Caco-2 (cell line): ENCODE measurements at regions of chr3 and their contacts with region 1.

Region 1: DNA sequence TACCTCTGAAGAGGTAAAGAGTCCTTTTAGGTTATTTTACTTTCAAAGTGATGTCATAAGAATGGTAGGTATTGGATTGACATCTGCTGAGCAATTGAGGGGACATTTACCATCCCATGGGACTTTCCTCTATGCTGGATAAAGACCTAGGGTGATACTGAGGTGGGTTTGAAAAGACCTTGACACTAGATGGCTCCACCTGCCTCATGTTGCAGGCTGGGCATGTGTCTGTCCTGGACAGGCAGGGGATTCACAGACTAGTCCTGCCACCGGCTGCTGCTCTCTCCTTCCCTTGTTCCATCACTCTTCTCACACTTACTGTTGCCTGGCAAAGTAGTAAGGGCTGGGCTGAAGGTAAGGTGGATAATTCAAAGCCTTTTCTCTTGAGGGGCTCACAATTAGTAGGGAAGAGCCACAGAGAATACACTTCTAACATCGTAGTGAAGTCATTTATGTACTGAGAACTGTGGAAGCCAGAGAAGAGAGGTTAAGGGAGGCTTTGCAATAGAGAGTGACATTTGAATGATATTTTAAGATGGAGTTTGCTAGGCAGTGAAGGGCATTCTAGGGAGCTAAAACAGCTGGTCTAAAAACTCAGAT is 27.7 kb downstream of the TRAK1 start:
- DNase-seq: peak; percentile 79
- H3K4me3 ChIP-seq: no peak overlapping the region
- H3K4me3 Mint-ChIP-seq: no peak overlapping the region
- H3K27ac Mint-ChIP-seq: peak overlapping the region; percentile 38
- H3K4me1 ChIP-seq: peaks cover 49% of the 10 kb centered on the region
- H3K4me1 Mint-ChIP-seq: peaks cover 41% of the 10 kb centered on the region
- H3K27me3 ChIP-seq: no peaks in the 10 kb centered on the region
- H3K27me3 Mint-ChIP-seq: no peaks in the 10 kb centered on the region
- CTCF ChIP-seq: peak; percentile 65 to 74

Region 2: DNA sequence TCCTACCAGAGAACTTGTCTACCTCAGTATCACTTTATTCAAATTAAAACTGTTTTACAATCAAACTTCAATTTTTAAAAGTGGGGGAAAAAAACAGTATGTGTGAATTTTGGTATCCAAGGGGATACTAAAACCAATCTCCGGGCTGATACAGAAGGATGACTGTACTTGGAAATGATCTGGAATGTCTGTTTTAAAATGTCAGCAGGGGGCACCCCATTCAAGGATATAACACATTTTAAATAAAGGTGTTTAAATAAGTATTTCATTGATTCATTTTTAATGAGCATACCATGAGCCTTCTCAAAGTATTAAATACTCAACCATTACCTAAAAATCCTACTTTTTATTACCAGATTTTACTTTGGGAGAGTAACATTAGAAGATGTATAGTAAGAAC is 224.9 kb before region 1 on chr3:
- CTCF ChIA-PET with region 1: no interaction called
- POLR2A ChIA-PET with region 1: no interaction called
- intact Hi-C with region 1: loop called (anchors 1 kb)
- DNase-seq: peak in 1 of 2 experiments; percentile 44
- H3K4me3 ChIP-seq: no peak overlapping the region
- H3K4me3 Mint-ChIP-seq: no peak overlapping the region
- H3K27ac Mint-ChIP-seq: no peak overlapping the region
- H3K4me1 ChIP-seq: no peaks in the 10 kb centered on the region
- H3K4me1 Mint-ChIP-seq: no peaks in the 10 kb centered on the region
- H3K27me3 ChIP-seq: no peaks in the 10 kb centered on the region
- H3K27me3 Mint-ChIP-seq: no peaks in the 10 kb centered on the region
- CTCF ChIP-seq: peak in 1 of 2 experiments; percentile 34

Region 3: DNA sequence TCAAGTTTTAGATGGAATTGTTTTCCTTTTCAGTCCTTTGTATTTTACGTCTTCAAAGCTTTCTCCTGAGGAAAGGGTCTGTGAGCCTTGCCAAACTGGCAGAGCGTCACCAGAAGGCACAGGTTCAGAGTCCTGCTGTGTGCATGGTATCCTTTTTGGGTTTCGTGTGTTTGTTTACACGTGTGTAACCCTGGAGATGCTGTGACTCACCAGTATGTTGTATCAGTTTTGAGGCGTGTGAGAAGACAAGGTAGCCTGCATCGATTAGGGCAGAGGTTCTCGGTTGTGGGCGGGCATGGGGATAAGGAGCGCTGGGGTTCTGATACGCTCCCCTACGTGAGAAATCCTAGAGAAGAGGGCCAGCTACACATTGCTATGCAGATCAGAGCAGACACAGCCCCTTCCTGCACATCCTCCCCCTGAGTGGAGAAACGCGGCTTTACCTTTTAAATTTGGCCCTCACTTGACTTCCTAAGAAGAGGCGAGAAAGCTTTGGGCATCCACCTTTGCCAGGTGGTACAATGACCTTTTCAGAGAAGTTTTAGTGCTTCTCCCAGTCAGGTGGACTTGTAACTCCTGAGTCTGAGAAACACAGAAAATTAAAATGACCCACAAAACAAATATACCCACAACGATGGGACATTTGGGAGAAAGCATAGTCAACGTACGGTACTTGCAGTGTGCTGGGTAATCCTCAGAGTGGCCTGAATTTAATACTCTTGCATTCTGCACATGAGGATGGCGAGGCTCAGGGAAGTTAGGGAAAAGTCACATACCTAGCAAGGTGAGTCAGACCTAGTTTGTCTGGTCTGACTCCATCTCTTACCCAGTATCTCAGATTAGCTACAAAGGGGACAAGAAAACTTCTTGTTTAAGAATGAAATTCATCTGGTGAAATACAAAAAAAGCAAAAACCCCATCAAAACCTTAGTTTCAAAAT is 10.4 kb after region 1 on chr3:
- CTCF ChIA-PET with region 1: interaction called, 18 read pairs
- POLR2A ChIA-PET with region 1: interaction called, 4 read pairs
- intact Hi-C with region 1: loop called (anchors 1 kb)
- DNase-seq: peak; percentile 53 to 63
- H3K4me3 ChIP-seq: no peak overlapping the region
- H3K4me3 Mint-ChIP-seq: peak overlapping the region; percentile 48
- H3K27ac Mint-ChIP-seq: peak overlapping the region; percentile 91
- H3K4me1 ChIP-seq: peaks cover 46% of the 10 kb centered on the region
- H3K4me1 Mint-ChIP-seq: peaks cover 33% of the 10 kb centered on the region
- H3K27me3 ChIP-seq: no peaks in the 10 kb centered on the region
- H3K27me3 Mint-ChIP-seq: no peaks in the 10 kb centered on the region
- CTCF ChIP-seq: no peak

Region 4: GRCh38 chr3:42149532-42150426 is 30.9 kb after region 1 on chr3:
- CTCF ChIA-PET with region 1: interaction called, 6 read pairs
- POLR2A ChIA-PET with region 1: no interaction called
- intact Hi-C with region 1: loop called (anchors 1 kb)
- DNase-seq: peak; percentile 88 to 97
- H3K4me3 ChIP-seq: no peak overlapping the region
- H3K4me3 Mint-ChIP-seq: peak overlapping the region; percentile 51
- H3K27ac Mint-ChIP-seq: peak overlapping the region; percentile 89
- H3K4me1 ChIP-seq: peaks cover 46% of the 10 kb centered on the region
- H3K4me1 Mint-ChIP-seq: peaks cover 18% of the 10 kb centered on the region
- H3K27me3 ChIP-seq: no peaks in the 10 kb centered on the region
- H3K27me3 Mint-ChIP-seq: no peaks in the 10 kb centered on the region
- CTCF ChIP-seq: no peak

Region 5: DNA sequence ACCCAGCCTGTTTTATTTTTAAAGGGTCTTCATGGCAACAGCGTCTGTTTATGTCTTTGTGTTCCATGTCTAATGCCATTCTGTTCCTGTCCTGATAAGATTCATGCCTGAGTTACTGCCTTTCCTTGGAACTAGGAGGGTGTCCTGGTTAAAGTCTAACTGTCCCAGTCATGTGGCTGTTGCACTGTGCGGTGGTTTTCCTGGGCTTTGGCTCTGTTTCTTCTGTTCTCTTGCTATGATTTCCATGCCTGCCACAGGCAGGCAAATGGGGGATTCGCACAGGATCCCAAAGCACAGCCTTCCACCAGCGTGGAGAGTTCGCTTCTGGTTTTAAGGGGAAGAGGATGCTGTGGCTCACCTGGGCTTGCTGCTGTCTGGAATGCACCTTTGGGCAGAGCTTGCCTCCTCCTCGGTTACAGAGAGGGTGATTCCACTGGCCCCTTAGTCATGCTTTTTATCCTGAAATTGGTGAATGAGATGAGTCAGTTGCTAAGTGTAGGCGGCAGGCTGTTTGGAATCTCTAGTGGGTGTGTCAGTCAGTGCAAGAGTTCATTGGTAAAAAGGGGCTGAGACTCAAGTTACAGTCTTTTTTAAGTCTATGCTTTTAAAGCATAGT is 60.4 kb after region 1 on chr3:
- CTCF ChIA-PET with region 1: interaction called, 13 read pairs
- POLR2A ChIA-PET with region 1: no interaction called
- intact Hi-C with region 1: no loop called
- DNase-seq: peak; percentile 69
- H3K4me3 ChIP-seq: no peak overlapping the region
- H3K4me3 Mint-ChIP-seq: peak overlapping the region; percentile 67
- H3K27ac Mint-ChIP-seq: peak overlapping the region; percentile 96
- H3K4me1 ChIP-seq: peaks cover 30% of the 10 kb centered on the region
- H3K4me1 Mint-ChIP-seq: peaks cover 17% of the 10 kb centered on the region
- H3K27me3 ChIP-seq: no peaks in the 10 kb centered on the region
- H3K27me3 Mint-ChIP-seq: no peaks in the 10 kb centered on the region
- CTCF ChIP-seq: no peak

Region 6: DNA sequence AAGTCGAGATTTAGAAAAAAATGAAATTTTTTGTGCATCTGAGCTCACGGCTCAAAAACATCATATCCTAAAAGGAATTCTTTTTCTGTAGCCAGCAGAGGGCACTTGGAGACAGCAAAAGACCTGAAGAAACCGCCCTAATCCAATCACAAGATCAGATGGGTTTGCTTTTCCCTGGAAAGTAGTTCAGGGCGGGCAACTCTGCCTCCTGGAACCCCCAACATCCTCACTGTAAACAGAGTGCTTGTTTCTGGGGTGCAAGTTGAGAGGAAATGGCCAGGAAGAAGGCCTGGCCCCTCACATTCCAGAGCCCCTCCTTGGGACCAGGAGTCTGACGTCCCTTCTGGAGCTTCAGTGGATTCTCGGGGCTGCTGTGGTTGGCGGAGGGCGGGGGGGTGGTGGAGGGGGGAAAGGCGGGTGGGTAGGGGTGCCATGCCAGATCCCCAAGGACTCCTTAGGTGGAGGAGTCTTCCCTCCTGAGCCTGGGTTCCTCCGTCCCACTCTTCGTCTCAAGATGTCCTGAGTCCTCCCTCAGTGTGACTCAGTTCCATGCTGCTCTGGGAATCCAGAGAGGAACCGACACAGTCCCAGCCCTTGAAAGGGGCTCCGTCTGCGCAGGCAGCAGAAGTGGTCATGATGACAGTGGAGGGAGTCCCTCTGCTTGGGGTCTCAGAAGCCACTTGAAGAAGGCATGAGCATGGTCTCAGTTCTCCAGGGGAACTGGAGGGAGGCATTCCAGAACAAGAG is 111.3 kb after region 1 on chr3:
- CTCF ChIA-PET with region 1: interaction called, 20 read pairs
- POLR2A ChIA-PET with region 1: no interaction called
- intact Hi-C with region 1: loop called (anchors 1 kb)
- DNase-seq: peak in 1 of 2 experiments; percentile 48
- H3K4me3 ChIP-seq: no peak overlapping the region
- H3K4me3 Mint-ChIP-seq: no peak overlapping the region
- H3K27ac Mint-ChIP-seq: no peak overlapping the region
- H3K4me1 ChIP-seq: peaks cover 4% of the 10 kb centered on the region; the same call in 1 of the 2 replicates
- H3K4me1 Mint-ChIP-seq: no peaks in the 10 kb centered on the region
- H3K27me3 ChIP-seq: no peaks in the 10 kb centered on the region
- H3K27me3 Mint-ChIP-seq: peaks cover 12% of the 10 kb centered on the region
- CTCF ChIP-seq: peak; percentile 55 to 61

Region 7: GRCh38 chr3:42443819-42444436 is 325.1 kb after region 1 on chr3:
- CTCF ChIA-PET with region 1: interaction called, 6 read pairs
- POLR2A ChIA-PET with region 1: no interaction called
- intact Hi-C with region 1: loop called (anchors 1 kb)
- DNase-seq: peak; percentile 81 to 89
- H3K4me3 ChIP-seq: no peak overlapping the region
- H3K4me3 Mint-ChIP-seq: no peak overlapping the region
- H3K27ac Mint-ChIP-seq: no peak overlapping the region
- H3K4me1 ChIP-seq: no peaks in the 10 kb centered on the region
- H3K4me1 Mint-ChIP-seq: no peaks in the 10 kb centered on the region
- H3K27me3 ChIP-seq: no peaks in the 10 kb centered on the region
- H3K27me3 Mint-ChIP-seq: peaks cover 5% of the 10 kb centered on the region
- CTCF ChIP-seq: peak; percentile 92 to 93